HEK293 (cell line): ENCODE measurements at regions of chr15 and their contacts with region 1.

Region 1: DNA sequence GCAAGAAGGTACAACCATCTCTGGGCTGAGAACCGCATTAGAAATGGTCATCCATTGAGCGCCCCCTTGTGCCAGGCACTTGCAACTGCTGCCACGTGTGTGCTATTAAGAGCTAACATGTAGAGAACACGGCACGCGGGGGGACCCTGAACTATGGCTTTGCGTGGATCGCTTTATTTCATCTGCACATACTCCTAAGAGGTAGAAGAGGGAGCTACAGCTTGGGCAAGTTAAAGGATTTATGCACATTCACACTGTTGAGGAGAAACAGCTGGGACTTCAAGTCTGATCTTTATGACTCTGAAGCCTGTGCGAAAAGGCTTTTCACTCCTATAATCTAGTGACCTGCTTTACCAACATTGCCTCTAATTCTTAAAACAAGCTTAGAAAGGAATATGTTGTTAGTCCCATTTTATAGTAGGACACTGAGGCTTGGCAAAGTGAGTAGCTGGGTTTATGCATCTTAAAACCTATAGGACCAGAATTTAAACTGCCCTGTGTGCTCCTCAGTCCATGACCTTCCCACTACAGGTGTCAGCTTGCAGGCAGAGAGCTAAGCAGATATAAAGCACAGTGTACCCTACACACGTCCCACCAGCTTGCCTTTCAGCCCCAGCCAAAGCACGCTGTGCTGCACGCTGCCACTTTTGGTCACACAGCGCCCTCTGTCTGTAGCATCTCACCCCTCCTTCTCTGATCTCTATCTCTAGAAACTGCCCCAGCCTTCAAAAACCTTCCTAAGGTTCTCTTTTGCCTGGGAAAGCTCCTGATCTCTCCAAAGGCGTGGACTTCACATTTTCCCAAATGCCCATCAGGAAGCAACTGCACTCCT is 57.8 kb downstream of the STARD5 start:
- H3K4me3 ChIP-seq: peak overlapping the region; percentile 4; the same call in 1 of the 2 replicates
- H3K27ac ChIP-seq: no peak overlapping the region
- H3K4me1 ChIP-seq: no peaks in the 10 kb centered on the region
- CTCF ChIP-seq: peak; percentile 86

Region 2: DNA sequence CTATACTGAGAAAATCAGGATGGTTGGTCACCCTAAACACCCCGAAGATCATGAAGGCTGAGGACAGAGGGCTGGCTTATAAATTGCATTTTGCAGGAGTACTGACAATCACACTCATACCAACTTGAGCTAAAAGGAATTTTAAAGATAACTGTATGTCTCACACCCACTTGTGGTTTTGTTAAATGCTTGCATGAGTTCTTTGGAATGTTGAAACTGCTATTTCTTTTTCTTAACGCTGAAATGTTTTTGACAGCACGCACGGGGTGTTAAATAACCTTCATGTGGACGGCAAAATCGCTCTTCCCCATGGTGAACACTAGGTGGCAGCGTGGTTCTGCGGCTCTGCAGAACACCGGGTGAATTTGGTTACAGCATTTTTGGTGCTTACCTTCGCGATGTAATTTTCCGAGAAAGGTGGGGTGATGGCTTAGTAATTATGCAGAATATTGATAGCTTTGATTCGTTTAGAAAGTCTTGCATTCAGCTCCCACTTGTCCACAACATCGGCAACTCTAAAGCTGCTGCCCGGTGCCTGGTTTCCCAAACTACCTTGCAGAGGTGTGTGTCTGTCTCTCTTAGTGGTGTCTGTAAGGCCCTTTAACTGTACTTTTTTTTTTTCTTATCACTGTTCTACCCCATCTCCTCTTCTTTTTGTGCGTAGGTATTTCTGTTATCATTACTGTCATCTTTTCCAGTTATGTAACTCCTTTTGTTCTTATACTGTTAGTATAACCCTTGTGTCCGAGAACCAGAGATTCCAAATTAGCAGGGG is 810.3 kb before region 1 on chr15:
- CTCF ChIA-PET with region 1: interaction called, 27 read pairs
- POLR2A ChIA-PET with region 1: no interaction called
- H3K4me3 ChIP-seq: no peak overlapping the region
- H3K27ac ChIP-seq: no peak overlapping the region
- H3K4me1 ChIP-seq: no peaks in the 10 kb centered on the region
- CTCF ChIP-seq: peak; percentile 75

Region 3: DNA sequence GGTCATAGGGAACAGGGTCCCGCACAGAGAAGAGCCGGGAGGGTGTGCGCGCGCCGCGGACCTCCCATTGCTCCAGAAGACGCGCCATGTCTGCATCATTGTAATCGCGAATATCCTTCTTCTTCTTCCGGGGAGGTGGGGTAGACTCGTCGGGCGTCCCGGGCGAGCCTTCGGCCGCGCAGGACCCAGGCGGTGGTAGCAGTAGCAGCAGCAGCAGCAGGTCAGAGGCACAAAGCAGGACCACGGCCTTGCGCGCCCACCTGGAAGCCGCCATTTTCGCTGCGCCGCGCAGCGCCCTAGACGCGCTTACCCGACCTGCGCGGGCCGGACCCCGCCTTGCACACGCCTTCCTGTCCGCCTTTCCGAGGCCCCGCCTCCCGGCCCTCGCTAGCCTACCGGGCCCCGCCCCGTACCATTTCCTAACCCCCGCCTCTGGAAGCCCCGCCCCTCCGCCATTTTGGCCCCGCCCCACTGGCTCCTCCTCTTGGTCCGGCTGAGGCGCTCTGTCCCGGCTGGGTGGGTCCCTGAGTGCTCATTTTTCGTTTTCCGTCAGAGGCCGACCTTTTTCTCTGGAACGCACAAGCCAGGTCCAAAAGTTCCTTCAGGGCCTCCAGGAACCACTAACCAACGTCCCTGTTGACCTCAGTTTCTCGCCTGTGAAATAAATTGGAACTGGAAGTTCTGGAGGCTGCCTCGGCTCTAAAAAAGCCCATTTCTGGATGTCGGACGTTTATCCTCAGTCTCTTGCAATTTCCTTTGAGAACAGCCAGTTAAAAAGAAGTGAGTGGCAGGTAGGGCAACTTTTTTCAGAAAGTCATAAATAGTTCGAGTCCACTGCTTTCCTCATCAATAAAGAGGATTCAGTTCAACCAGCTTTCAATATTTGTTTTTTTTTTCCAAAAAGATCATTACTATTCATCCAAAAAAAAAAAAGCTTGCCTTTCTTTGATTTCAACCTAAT is 276.4 kb before region 1 on chr15 and contains the start of gene MESD:
- CTCF ChIA-PET with region 1: interaction called, 46 read pairs
- POLR2A ChIA-PET with region 1: no interaction called
- H3K4me3 ChIP-seq: peak within 1 kb of the TSS; percentile 95
- H3K27ac ChIP-seq: peak within 1 kb of the TSS; percentile 56
- H3K4me1 ChIP-seq: peaks cover 13% of the 10 kb centered on the region
- CTCF ChIP-seq: peak; percentile 42

Region 4: DNA sequence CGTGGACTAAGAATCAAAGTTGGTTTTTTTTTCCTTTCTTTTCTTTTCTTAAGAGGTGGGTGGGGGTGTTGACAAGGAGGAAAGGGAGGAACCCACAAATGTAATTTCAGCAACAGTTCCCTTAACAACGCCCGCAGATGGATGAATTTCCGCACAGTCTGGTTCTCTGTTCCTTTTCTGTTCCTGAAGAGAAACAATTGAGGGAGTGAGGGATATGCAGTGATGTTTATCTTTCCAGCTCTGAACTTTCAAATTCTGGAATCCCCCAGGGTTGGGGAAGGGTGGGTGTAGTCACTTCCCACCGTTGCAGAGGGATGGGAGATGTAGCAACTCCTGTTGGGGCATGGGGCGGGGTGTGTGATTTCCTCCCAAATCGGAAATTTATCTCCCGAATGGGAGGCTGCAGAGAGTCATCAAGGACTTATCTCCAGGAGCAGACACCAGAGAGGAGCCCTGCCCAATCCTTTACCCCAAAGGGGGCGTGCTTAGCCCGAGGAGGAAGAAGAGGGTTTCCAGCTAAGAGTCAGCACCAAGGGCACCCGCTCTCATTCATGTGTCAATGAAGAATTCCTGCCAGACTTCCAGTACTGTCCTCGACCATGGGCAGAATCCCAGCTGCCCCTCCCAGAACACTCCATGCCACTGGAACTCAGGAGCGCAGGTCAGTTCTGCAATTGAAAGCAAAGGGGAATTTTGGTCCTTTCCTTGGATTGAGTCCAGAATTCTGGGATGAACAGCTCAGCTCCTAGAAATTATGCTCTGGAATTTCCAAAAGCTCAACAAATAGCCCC is 167.1 kb before region 1 on chr15:
- CTCF ChIA-PET with region 1: interaction called, 530 read pairs
- POLR2A ChIA-PET with region 1: no interaction called
- H3K4me3 ChIP-seq: no peak overlapping the region
- H3K27ac ChIP-seq: no peak overlapping the region
- H3K4me1 ChIP-seq: no peaks in the 10 kb centered on the region
- CTCF ChIP-seq: no peak

Region 5: GRCh38 chr15:81163961-81164800 is 102.0 kb before region 1 on chr15:
- CTCF ChIA-PET with region 1: interaction called, 24 read pairs
- POLR2A ChIA-PET with region 1: no interaction called
- H3K4me3 ChIP-seq: no peak overlapping the region
- H3K27ac ChIP-seq: no peak overlapping the region
- H3K4me1 ChIP-seq: no peaks in the 10 kb centered on the region
- CTCF ChIP-seq: no peak

Region 6: DNA sequence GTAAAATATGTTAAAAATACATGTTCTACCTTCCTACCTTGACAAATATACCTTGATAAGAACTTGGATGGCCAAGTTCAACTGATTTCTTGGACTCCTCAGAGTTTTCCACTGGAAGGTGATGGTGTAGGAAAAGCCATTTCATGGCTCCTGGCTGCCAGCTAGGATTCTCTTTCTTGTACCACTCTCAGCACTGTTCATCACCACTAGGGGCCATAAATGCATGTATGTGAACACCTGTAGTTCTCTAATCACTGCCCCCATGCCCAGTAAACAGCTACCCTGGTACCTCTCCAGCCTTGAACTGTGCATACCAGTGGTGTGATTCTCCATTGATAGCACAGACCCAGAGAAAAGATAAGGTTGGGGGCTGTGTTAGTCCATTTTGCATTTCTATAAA is 31.3 kb before region 1 on chr15:
- CTCF ChIA-PET with region 1: interaction called, 21 read pairs
- POLR2A ChIA-PET with region 1: no interaction called
- H3K4me3 ChIP-seq: no peak overlapping the region
- H3K27ac ChIP-seq: no peak overlapping the region
- H3K4me1 ChIP-seq: no peaks in the 10 kb centered on the region
- CTCF ChIP-seq: no peak

Region 7: DNA sequence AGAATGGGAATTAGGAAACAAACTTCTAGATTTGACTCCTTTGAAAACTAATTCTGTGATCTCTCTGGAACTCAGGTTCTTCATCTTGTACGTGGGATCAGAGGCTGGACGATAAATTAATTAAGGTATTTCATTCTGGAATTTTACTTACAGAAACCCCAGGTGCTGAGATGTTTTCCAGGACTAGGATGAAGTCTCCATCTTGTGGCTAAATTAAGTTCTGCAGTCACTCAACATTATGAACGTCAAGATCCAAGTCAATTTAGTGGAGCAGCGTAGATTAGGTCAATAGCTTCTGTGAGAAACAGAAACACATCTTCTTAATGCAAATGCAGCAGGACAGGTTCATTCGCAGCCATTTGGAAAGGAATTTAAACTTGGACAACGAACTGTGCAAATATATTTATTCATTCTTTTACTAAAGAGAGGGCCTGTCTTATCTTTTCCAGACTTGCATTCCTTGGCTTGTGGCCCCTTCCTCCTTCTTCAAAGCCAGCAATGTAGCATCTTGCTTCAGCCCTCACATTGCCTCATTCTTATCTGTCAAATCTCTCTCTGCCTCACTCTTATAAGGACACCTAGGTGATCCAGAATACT is 134.6 kb after region 1 on chr15:
- CTCF ChIA-PET with region 1: interaction called, 199 read pairs
- POLR2A ChIA-PET with region 1: no interaction called
- H3K4me3 ChIP-seq: no peak overlapping the region
- H3K27ac ChIP-seq: no peak overlapping the region
- H3K4me1 ChIP-seq: no peaks in the 10 kb centered on the region
- CTCF ChIP-seq: peak; percentile 48; the same call in 1 of the 2 replicates

Region 8: DNA sequence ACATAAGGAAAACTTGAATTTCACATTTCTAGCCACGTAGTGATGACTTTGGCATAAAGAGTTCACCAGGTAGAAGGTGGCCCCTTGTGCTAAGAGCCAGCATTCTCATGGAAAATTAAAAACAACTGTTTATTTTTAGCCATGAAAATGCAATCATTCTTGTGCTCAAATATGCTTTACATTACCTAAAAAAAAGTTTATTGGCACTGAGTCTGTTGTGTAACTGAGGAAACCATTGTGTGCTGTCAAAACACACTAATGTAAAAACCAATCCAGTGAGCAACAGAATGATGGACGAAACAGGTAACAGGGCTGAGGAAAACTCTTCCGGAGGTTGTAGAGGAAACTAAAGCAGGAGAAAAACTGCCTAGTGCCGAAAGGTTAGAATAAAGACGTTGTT is 394.8 kb after region 1 on chr15:
- CTCF ChIA-PET with region 1: no interaction called
- POLR2A ChIA-PET with region 1: no interaction called
- H3K4me3 ChIP-seq: no peak overlapping the region
- H3K27ac ChIP-seq: no peak overlapping the region
- H3K4me1 ChIP-seq: no peaks in the 10 kb centered on the region
- CTCF ChIP-seq: no peak

Region 9: GRCh38 chr15:81880314-81880713 is 614.2 kb after region 1 on chr15:
- CTCF ChIA-PET with region 1: no interaction called
- POLR2A ChIA-PET with region 1: no interaction called
- H3K4me3 ChIP-seq: no peak overlapping the region
- H3K27ac ChIP-seq: no peak overlapping the region
- H3K4me1 ChIP-seq: peaks cover 20% of the 10 kb centered on the region
- CTCF ChIP-seq: no peak